ENCODE measurements at regions of chr2 and their contacts with region 1.

Region 1: GRCh38 chr2:227890495-227891079 is 19.2 kb downstream of the DAW1 start:
- DNase-seq: peak in 2 of 9 experiments; percentile 31 to 47
- ATAC-seq: no peak
- H3K4me3 ChIP-seq: no peak overlapping the region
- H3K4me3 Mint-ChIP-seq: no peak overlapping the region
- H3K27ac ChIP-seq: no peak overlapping the region
- H3K27ac Mint-ChIP-seq: no peak overlapping the region
- H3K4me1 ChIP-seq: no peaks in the 10 kb centered on the region
- H3K4me1 Mint-ChIP-seq: no peaks in the 10 kb centered on the region
- H3K27me3 ChIP-seq: no peaks in the 10 kb centered on the region
- H3K27me3 Mint-ChIP-seq: peaks cover 2% of the 10 kb centered on the region
- CTCF ChIP-seq: peak; percentile 66

Region 2: GRCh38 chr2:227877421-227878310 is 12.9 kb before region 1 on chr2:
- CTCF ChIA-PET with region 1: interaction called, 11 read pairs
- POLR2A ChIA-PET with region 1: interaction called, 3 read pairs
- intact Hi-C with region 1: no loop called
- DNase-seq: no peak
- ATAC-seq: no peak
- H3K4me3 ChIP-seq: no peak overlapping the region
- H3K4me3 Mint-ChIP-seq: no peak overlapping the region
- H3K27ac ChIP-seq: no peak overlapping the region
- H3K27ac Mint-ChIP-seq: no peak overlapping the region
- H3K4me1 ChIP-seq: no peaks in the 10 kb centered on the region
- H3K4me1 Mint-ChIP-seq: no peaks in the 10 kb centered on the region
- H3K27me3 ChIP-seq: peaks cover 0 to 2% of the 10 kb centered on the region in 2 experiments
- H3K27me3 Mint-ChIP-seq: peaks cover 23% of the 10 kb centered on the region
- CTCF ChIP-seq: no peak

Region 3: GRCh38 chr2:227903381-227903780 is 12.8 kb after region 1 on chr2:
- CTCF ChIA-PET with region 1: interaction called, 10 read pairs
- POLR2A ChIA-PET with region 1: no interaction called
- intact Hi-C with region 1: no loop called
- DNase-seq: no peak
- ATAC-seq: no peak
- H3K4me3 ChIP-seq: no peak overlapping the region
- H3K4me3 Mint-ChIP-seq: no peak overlapping the region
- H3K27ac ChIP-seq: no peak overlapping the region
- H3K27ac Mint-ChIP-seq: no peak overlapping the region
- H3K4me1 ChIP-seq: no peaks in the 10 kb centered on the region
- H3K4me1 Mint-ChIP-seq: no peaks in the 10 kb centered on the region
- H3K27me3 ChIP-seq: no peaks in the 10 kb centered on the region
- H3K27me3 Mint-ChIP-seq: no peaks in the 10 kb centered on the region
- CTCF ChIP-seq: no peak

Region 4: GRCh38 chr2:227914362-227914761 is 23.8 kb after region 1 on chr2:
- CTCF ChIA-PET with region 1: no interaction called
- POLR2A ChIA-PET with region 1: no interaction called
- intact Hi-C with region 1: no loop called
- DNase-seq: no peak
- ATAC-seq: no peak
- H3K4me3 ChIP-seq: no peak overlapping the region
- H3K4me3 Mint-ChIP-seq: no peak overlapping the region
- H3K27ac ChIP-seq: no peak overlapping the region
- H3K27ac Mint-ChIP-seq: no peak overlapping the region
- H3K4me1 ChIP-seq: no peaks in the 10 kb centered on the region
- H3K4me1 Mint-ChIP-seq: no peaks in the 10 kb centered on the region
- H3K27me3 ChIP-seq: no peaks in the 10 kb centered on the region
- H3K27me3 Mint-ChIP-seq: no peaks in the 10 kb centered on the region
- CTCF ChIP-seq: no peak

Region 5: DNA sequence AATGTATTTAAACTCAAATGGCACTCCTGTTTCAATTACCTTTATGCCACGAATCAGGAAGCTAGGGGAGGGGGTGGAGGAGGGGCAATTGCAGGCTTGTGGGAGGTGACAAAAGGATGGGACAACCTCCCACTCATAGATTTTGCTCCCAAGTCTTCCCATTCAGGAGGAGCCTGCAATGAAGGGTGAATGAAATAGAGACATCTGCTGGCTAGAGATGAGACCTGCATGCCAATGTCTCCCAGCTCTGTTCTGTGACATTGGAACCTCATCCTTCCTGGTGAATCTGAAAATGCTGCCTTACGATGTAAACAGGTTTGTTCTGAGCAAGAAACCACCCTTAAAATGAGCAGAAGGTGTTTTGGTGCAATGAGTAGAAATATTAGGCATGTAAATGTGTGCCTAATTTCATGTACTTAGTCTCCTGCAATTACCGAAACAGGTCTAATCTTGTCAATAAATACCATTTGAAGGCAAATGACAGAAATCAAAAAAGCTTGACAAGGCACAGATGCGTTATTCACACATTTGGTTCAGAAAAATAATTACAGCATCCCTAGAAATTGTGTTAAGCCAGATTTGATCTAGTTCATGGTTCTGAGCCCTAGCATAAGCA is 1383.2 kb after region 1 on chr2:
- CTCF ChIA-PET with region 1: interaction called, 6 read pairs
- POLR2A ChIA-PET with region 1: no interaction called
- intact Hi-C with region 1: loop called in 1 of 2 experiments (anchors 5 kb)
- DNase-seq: no peak
- ATAC-seq: no peak
- H3K4me3 ChIP-seq: no peak overlapping the region
- H3K4me3 Mint-ChIP-seq: no peak overlapping the region
- H3K27ac ChIP-seq: no peak overlapping the region
- H3K27ac Mint-ChIP-seq: no peak overlapping the region
- H3K4me1 ChIP-seq: no peaks in the 10 kb centered on the region
- H3K4me1 Mint-ChIP-seq: peaks cover 2% of the 10 kb centered on the region
- H3K27me3 ChIP-seq: peaks cover 4% of the 10 kb centered on the region in 2 experiments
- H3K27me3 Mint-ChIP-seq: peaks cover 14% of the 10 kb centered on the region
- CTCF ChIP-seq: no peak

Region 6: GRCh38 chr2:229586746-229587705 is 1696.4 kb after region 1 on chr2:
- CTCF ChIA-PET with region 1: no interaction called
- POLR2A ChIA-PET with region 1: no interaction called
- intact Hi-C with region 1: loop called in 1 of 2 experiments (anchors 10 kb)
- DNase-seq: peak in 2 of 9 experiments; percentile 3 to 14
- ATAC-seq: no peak
- H3K4me3 ChIP-seq: no peak overlapping the region
- H3K4me3 Mint-ChIP-seq: no peak overlapping the region
- H3K27ac ChIP-seq: no peak overlapping the region
- H3K27ac Mint-ChIP-seq: no peak overlapping the region
- H3K4me1 ChIP-seq: no peaks in the 10 kb centered on the region
- H3K4me1 Mint-ChIP-seq: peaks cover 5% of the 10 kb centered on the region
- H3K27me3 ChIP-seq: peaks cover 0 to 4% of the 10 kb centered on the region in 2 experiments
- H3K27me3 Mint-ChIP-seq: peaks cover 27% of the 10 kb centered on the region
- CTCF ChIP-seq: no peak

Measured in CD8-positive, alpha-beta T cell (primary cell).